ENCODE measurements at regions of chr6 and their contacts with region 1.

Region 1: GRCh38 chr6:69866770-69867638 is 648 bp downstream of the COL19A1 start:
- DNase-seq: peak; percentile 74
- ATAC-seq: peak; percentile 81
- H3K4me3 Mint-ChIP-seq: peak overlapping the region; percentile 64
- H3K27ac Mint-ChIP-seq: peak overlapping the region; percentile 65
- H3K4me1 Mint-ChIP-seq: peaks cover 23% of the 10 kb centered on the region
- H3K27me3 Mint-ChIP-seq: peaks cover 46% of the 10 kb centered on the region

Region 2: GRCh38 chr6:69835414-69836179 is 31.4 kb before region 1 on chr6:
- CTCF ChIA-PET with region 1: interaction called, 3 read pairs
- POLR2A ChIA-PET with region 1: no interaction called
- intact Hi-C with region 1: loop called in 1 of 2 experiments (anchors 2 kb)
- DNase-seq: no peak
- ATAC-seq: peak; percentile 78
- H3K4me3 Mint-ChIP-seq: no peak overlapping the region
- H3K27ac Mint-ChIP-seq: no peak overlapping the region
- H3K4me1 Mint-ChIP-seq: peaks cover 4% of the 10 kb centered on the region
- H3K27me3 Mint-ChIP-seq: no peaks in the 10 kb centered on the region

Region 3: GRCh38 chr6:69895396-69895795 is 28.4 kb after region 1 on chr6:
- CTCF ChIA-PET with region 1: no interaction called
- POLR2A ChIA-PET with region 1: no interaction called
- intact Hi-C with region 1: no loop called
- DNase-seq: no peak
- ATAC-seq: no peak
- H3K4me3 Mint-ChIP-seq: no peak overlapping the region
- H3K27ac Mint-ChIP-seq: no peak overlapping the region
- H3K4me1 Mint-ChIP-seq: no peaks in the 10 kb centered on the region
- H3K27me3 Mint-ChIP-seq: no peaks in the 10 kb centered on the region